Prostate gland (tissue), 2 donors: ENCODE measurements at regions of chr7 and their contacts with region 1.

Region 1: DNA sequence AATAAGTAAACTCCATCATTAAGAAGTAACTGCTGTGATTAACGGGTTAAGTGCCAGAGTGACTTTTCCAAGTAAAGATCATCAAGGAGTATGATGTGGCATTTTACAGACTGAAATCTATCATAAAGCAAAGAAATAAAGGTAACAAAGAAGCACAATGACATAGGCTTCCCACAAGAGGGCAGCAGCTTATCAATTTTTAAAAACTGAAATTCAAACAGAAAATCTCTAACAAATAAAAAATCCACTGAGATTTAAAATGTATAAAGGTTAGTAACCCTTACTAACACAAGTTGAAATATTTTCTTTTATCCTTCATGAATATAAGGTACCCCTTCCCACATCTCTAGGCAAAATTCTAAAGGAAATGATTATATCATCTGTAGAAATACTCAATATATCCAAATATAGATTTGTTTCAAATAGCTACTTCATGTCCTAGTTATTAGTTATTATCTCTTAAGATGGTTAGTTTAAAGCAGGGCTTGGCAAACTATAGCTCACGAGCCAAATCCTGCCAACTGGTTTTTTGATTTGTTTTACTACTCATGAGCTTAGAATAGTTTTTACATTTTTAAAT is 29.2 kb downstream of the FAM3C start:
- DNase-seq: no peak
- H3K4me3 ChIP-seq: no peak overlapping the region
- H3K27ac ChIP-seq: no peak overlapping the region
- H3K4me1 ChIP-seq: no peaks in the 10 kb centered on the region
- H3K27me3 ChIP-seq: no peaks in the 10 kb centered on the region
- CTCF ChIP-seq: peak; percentile 49 to 85 (median 72)
- POLR2A ChIP-seq: no peak

Region 2: DNA sequence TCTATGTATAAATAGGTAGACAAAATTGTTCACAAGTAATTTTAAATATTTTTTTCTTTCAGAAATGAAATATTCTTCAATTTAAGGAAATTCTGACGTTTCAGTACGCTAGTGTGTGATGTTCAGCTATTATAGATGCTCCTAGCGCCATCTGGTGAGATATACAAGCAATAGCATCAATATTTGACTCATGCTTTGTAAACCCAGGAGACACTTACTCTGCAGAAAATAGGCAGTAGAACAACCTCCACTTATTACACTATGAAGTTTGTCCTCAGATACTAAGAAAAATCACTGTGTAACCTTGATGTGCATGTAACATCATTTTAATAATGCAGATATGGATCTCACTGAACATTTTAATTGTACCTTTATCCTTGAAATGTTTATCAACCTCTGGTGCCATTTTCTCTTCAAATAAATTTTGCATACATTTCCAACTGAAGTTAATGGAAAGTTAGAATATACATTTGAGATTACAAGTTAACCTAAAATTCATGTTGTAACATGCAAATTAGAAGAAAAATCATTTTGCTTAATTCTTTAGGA is 180.7 kb after region 1 on chr7:
- intact Hi-C with region 1: loop called (anchors 2 kb)
- DNase-seq: no peak
- H3K4me3 ChIP-seq: no peak overlapping the region
- H3K27ac ChIP-seq: no peak overlapping the region
- H3K4me1 ChIP-seq: no peaks in the 10 kb centered on the region
- H3K27me3 ChIP-seq: no peaks in the 10 kb centered on the region
- CTCF ChIP-seq: peak; percentile 37 to 85 (median 68)
- POLR2A ChIP-seq: no peak

Region 3: GRCh38 chr7:121994625-121995410 is 627.9 kb after region 1 on chr7:
- intact Hi-C with region 1: loop called (anchors 10 kb)
- DNase-seq: peak; percentile 48
- H3K4me3 ChIP-seq: no peak overlapping the region
- H3K27ac ChIP-seq: no peak overlapping the region
- H3K4me1 ChIP-seq: no peaks in the 10 kb centered on the region
- H3K27me3 ChIP-seq: no peaks in the 10 kb centered on the region
- CTCF ChIP-seq: peak in 3 of 4 experiments; percentile 51 to 56 (median 55)
- POLR2A ChIP-seq: no peak